Pancreas (tissue), 10 donors: ENCODE measurements at regions of chr11 and their contacts with region 1.

Region 1: DNA sequence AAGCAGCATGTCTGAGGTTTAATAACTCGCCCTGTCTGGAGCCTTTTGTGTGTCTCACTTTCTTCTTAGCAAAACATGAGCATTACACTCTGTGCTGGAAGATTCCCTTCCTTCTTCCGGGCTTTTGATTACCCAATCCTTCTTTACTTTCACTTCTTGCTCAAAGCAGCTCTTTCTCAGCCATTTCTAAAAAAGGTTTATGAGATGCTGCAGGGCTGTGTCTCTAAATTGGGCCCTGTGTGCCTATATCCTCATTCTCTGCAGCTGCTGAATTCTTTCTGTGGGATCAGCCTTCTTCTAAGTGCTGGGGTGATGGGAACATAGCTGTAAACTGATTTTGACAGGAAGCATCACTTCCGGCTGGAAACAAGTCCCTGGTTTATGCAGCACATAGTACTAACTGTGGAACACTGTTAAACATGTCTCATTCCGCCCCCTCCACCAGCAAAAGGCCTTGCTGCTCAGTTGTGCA is 71.8 kb downstream of the PIWIL4 start:
- DNase-seq: no peak
- ATAC-seq: peak in 2 of 4 donors; percentile 66 to 80
- H3K4me3 ChIP-seq: no peak overlapping the region
- H3K27ac ChIP-seq: peak overlapping the region in 1 of 4 donors; percentile 54
- H3K4me1 ChIP-seq: no peaks in the 10 kb centered on the region
- H3K27me3 ChIP-seq: no peaks in the 10 kb centered on the region
- CTCF ChIP-seq: no peak

Region 2: GRCh38 chr11:94117871-94118270 is 521.1 kb before region 1 on chr11:
- intact Hi-C with region 1: no loop called
- DNase-seq: no peak
- ATAC-seq: no peak
- H3K4me3 ChIP-seq: no peak overlapping the region
- H3K27ac ChIP-seq: no peak overlapping the region
- H3K4me1 ChIP-seq: peaks cover 0 to 9% (median 7%) of the 10 kb centered on the region in 3 donors
- H3K27me3 ChIP-seq: no peaks in the 10 kb centered on the region
- CTCF ChIP-seq: no peak

Region 3: DNA sequence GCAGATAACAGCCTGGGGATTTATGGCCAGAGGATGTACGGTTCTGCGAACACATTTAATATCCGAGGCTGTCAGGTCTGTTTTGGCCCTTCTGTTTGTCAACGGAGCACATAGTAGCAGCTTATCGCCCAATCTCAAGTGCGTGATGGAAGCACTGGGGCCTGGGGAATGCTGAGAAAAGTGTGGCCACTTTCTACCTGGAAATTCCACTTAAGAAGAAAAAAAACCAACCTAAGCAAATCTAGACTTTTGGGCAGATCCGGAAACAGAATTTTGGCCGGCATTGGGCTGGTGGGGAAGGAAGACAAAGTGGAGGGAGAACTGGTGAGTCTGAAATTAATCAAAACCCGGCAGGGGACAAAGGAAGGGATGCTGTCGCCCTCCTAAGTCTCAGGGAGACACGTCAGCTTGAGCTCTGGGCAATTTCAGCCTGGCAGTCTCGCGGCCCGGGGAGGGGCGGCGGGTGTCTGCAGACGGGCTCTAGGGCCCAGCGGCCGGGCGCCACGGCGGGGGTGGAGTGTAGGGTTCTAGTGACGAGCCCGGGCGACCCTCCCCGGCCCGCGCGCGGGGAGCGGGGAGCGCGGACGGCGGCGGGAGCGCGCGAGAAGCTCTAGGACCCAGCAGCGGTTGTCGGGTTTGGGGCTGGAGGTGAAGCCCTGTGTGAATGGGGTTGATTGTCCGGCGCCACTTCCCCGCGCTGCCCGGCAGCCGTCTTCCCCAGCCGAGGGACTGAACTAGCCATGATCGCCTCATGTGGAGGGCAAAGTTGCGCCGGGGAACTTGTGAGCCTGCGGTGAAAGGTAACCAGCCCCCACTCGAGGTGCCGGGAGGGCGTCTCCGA is 129.0 kb after region 1 on chr11 and contains the start of gene AMOTL1:
- intact Hi-C with region 1: loop called in 1 of 3 experiments (anchors 10 kb)
- DNase-seq: peak; percentile 86 to 95 (median 90)
- ATAC-seq: peak; percentile 86 to 93 (median 92)
- H3K4me3 ChIP-seq: peak within 1 kb of the TSS; percentile 62 to 92 (median 78)
- H3K27ac ChIP-seq: peak within 1 kb of the TSS; percentile 83 to 94 (median 92)
- H3K4me1 ChIP-seq: peaks cover 0 to 14% (median 4%) of the 10 kb centered on the region in 3 donors
- H3K27me3 ChIP-seq: no peaks in the 10 kb centered on the region
- CTCF ChIP-seq: no peak
- total RNA-seq, gene AMOTL1: 17.0 to 30.2 (median 19.6) TPM